ENCODE measurements at regions of chr16 and their contacts with region 1.

Region 1: DNA sequence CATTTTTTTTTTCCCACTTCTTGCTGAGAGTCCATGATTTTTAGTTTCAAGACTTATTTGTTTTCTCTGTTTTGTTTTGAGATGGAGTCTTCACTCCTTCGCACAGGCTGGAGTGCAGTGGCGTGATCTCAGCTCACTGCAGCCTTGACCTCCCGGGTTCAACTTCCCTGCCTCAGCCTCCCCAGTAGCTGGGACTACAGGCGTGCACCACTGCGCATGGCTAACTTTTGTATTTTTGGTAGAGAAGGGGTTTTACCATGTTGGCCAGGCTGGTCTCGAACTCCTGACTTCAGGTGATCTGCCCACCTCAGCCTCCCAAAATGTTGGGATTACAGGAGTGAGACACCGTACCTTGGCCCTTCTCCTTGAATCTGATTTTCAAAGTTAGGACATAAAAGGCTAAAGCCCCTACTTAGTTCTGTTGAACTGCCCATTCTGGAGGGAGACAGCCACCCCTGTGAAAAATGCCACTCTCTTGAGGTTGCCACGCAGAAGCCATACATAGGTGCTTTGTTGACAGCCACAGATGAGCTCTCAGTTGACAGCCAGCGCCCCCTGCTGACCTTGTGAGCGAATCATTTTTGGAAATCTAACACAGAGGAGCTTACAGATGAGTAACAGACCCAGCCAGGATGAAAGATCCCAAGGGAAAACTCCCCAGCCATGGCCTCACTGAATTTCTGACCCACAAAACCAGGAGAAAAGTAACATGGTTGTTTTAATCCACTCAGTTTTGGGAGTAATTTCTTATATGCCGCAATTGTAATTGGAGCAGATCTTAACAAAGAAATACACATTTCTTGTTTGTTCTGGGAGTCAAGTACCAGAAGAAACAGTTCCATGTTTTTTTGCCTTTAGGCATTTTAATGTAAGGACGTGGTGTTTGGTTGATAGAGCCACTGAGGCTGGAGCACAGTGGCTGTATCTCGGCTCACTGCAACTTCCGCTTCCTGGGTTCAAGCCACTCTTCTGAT is 38.8 kb downstream of the PKD1L3 start:
- DNase-seq: peak; percentile 84
- H3K4me3 ChIP-seq: no peak overlapping the region
- H3K27ac ChIP-seq: no peak overlapping the region
- H3K4me1 ChIP-seq: no peaks in the 10 kb centered on the region
- H3K27me3 ChIP-seq: peaks cover 15% of the 10 kb centered on the region
- CTCF ChIP-seq: peak; percentile 89

Region 2: GRCh38 chr16:71883849-71884638 is 77.3 kb before region 1 on chr16 and contains the start of gene ZNF821:
- intact Hi-C with region 1: loop called (anchors 5 kb)
- DNase-seq: peak; percentile 82
- H3K4me3 ChIP-seq: peak within 1 kb of the TSS; percentile 97
- H3K27ac ChIP-seq: peak within 1 kb of the TSS; percentile 90
- H3K4me1 ChIP-seq: peaks cover 32% of the 10 kb centered on the region
- H3K27me3 ChIP-seq: no peaks in the 10 kb centered on the region
- CTCF ChIP-seq: peak; percentile 64
- total RNA-seq, gene ZNF821: 3.0 TPM